ENCODE measurements at regions of chr11 and their contacts with region 1.

Region 1: GRCh38 chr11:5891216-5891800 is 1.7 kb upstream of the OR52E5 start:
- DNase-seq: peak in 2 of 14 experiments; percentile 5 to 15
- ATAC-seq: no peak
- H3K4me3 ChIP-seq: no peak overlapping the region
- H3K4me3 Mint-ChIP-seq: no peak overlapping the region
- H3K27ac ChIP-seq: no peak overlapping the region
- H3K27ac Mint-ChIP-seq: no peak overlapping the region
- H3K4me1 ChIP-seq: no peaks in the 10 kb centered on the region
- H3K4me1 Mint-ChIP-seq: no peaks in the 10 kb centered on the region
- H3K27me3 ChIP-seq: peaks cover 0 to 4% of the 10 kb centered on the region in 2 experiments
- H3K27me3 Mint-ChIP-seq: peaks cover 22% of the 10 kb centered on the region
- CTCF ChIP-seq: peak; percentile 48

Region 2: DNA sequence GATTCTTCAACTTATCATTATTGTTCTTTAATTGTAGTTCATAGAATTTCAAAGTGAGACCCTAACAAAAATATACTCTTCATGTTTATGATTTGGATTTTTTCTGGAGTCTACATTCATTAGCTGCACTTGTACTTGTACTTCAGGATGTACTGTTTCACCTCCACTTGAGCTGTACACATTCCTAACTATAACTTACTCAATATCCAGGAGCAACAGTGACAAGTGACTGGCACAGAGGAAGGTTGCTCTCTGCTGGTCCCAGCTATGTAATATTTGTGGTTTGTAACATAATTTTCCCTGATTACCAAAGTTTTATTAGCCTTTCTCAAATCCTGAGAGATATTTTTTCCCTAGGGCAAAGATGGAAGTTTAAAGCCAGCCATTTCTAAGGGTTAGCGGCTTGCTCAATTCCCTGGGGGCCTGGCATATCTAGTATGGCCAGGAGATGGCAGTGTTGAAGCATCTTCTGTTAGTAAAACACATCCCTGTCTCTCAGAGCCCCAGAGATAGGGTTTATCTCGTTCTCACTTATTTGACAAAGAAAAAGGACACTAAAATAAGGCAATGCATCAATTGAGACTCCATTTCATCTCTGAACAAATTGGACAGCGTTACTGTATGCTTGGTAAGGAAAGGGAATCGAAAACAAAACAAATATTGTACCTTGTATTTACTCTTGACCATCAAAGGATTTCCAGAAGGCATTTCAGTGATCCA is 767.3 kb before region 1 on chr11:
- CTCF ChIA-PET with region 1: no interaction called
- POLR2A ChIA-PET with region 1: no interaction called
- intact Hi-C with region 1: loop called (anchors 2 to 5 kb)
- DNase-seq: peak; percentile 3 to 61 (median 18)
- ATAC-seq: no peak
- H3K4me3 ChIP-seq: no peak overlapping the region
- H3K4me3 Mint-ChIP-seq: no peak overlapping the region
- H3K27ac ChIP-seq: no peak overlapping the region
- H3K27ac Mint-ChIP-seq: no peak overlapping the region
- H3K4me1 ChIP-seq: no peaks in the 10 kb centered on the region
- H3K4me1 Mint-ChIP-seq: no peaks in the 10 kb centered on the region
- H3K27me3 ChIP-seq: peaks cover 0 to 7% of the 10 kb centered on the region in 2 experiments
- H3K27me3 Mint-ChIP-seq: peaks cover 18% of the 10 kb centered on the region
- CTCF ChIP-seq: peak; percentile 71

Region 3: DNA sequence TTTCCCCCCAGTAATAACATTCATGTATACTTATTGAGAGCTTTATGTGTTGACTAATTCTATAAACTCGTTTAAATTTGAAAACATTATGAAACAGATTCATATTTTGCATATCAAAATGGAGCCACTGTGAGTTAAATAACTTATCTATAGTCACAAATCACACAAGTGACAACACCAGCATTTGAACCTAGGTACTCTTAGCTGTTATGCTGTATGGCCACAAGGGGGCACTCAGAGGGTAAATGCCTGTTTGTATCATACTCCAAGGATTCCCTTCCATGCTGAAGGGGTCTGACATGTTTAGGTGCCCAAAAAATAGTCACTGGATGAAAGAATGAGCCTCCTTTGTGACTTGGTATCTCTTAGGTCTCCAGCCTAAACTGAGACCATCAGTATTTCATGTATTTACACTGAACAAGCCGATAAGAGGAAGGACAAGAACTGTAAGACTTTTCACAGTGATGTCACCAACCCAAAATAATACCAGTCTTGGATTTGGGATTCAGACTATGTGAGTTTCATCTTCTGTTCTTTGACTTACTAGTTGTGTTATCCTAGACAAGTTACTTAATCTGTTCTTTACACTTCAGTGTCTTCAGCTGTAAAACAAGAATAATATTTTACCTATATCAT is 415.0 kb before region 1 on chr11:
- CTCF ChIA-PET with region 1: interaction called, 7 read pairs
- POLR2A ChIA-PET with region 1: no interaction called
- intact Hi-C with region 1: loop called in 1 of 2 experiments (anchors 5 kb)
- DNase-seq: peak in 13 of 14 experiments; percentile 2 to 64 (median 7)
- ATAC-seq: no peak
- H3K4me3 ChIP-seq: no peak overlapping the region
- H3K4me3 Mint-ChIP-seq: no peak overlapping the region
- H3K27ac ChIP-seq: no peak overlapping the region
- H3K27ac Mint-ChIP-seq: no peak overlapping the region
- H3K4me1 ChIP-seq: no peaks in the 10 kb centered on the region
- H3K4me1 Mint-ChIP-seq: no peaks in the 10 kb centered on the region
- H3K27me3 ChIP-seq: peaks cover 5 to 7% of the 10 kb centered on the region in 2 experiments
- H3K27me3 Mint-ChIP-seq: peaks cover 33% of the 10 kb centered on the region
- CTCF ChIP-seq: peak; percentile 73

Region 4: DNA sequence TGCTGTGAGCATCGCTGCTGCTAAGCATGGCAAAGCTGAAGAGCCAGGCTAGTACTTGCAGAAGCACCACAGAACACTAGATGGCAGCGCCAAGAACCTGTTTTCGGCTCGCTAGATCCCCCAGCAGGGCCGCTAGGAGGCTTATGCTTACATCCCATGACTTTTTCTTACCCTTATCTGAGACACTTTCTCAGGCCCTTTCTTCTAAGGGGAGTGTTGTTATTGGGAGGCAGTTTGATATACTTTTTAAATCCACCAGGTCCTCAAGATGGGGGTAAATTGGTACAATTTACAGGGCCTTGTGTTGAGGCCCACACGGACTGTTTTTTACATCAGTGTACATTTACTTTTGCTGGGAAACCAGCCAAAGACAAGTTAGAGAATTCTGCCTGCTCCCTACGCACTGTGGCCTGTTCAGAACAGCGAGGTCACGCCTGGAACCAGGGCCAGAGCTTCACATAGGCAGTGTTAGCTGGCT is 290.9 kb before region 1 on chr11:
- CTCF ChIA-PET with region 1: no interaction called
- POLR2A ChIA-PET with region 1: no interaction called
- intact Hi-C with region 1: loop called in 1 of 2 experiments (anchors 5 kb)
- DNase-seq: peak; percentile 40 to 78 (median 53)
- ATAC-seq: peak; percentile 90
- H3K4me3 ChIP-seq: no peak overlapping the region
- H3K4me3 Mint-ChIP-seq: no peak overlapping the region
- H3K27ac ChIP-seq: no peak overlapping the region
- H3K27ac Mint-ChIP-seq: no peak overlapping the region
- H3K4me1 ChIP-seq: peaks cover 8% of the 10 kb centered on the region
- H3K4me1 Mint-ChIP-seq: peaks cover 12% of the 10 kb centered on the region
- H3K27me3 ChIP-seq: peaks cover 0 to 8% of the 10 kb centered on the region in 2 experiments
- H3K27me3 Mint-ChIP-seq: peaks cover 20% of the 10 kb centered on the region
- CTCF ChIP-seq: peak; percentile 84

Region 5: GRCh38 chr11:5847711-5848110 is 43.6 kb before region 1 on chr11:
- CTCF ChIA-PET with region 1: no interaction called
- POLR2A ChIA-PET with region 1: no interaction called
- intact Hi-C with region 1: no loop called
- DNase-seq: no peak
- ATAC-seq: no peak
- H3K4me3 ChIP-seq: no peak overlapping the region
- H3K4me3 Mint-ChIP-seq: no peak overlapping the region
- H3K27ac ChIP-seq: no peak overlapping the region
- H3K27ac Mint-ChIP-seq: no peak overlapping the region
- H3K4me1 ChIP-seq: no peaks in the 10 kb centered on the region
- H3K4me1 Mint-ChIP-seq: no peaks in the 10 kb centered on the region
- H3K27me3 ChIP-seq: peaks cover 0 to 3% of the 10 kb centered on the region in 2 experiments
- H3K27me3 Mint-ChIP-seq: peaks cover 3% of the 10 kb centered on the region
- CTCF ChIP-seq: no peak

Region 6: GRCh38 chr11:6012035-6012668 is 120.8 kb after region 1 on chr11:
- CTCF ChIA-PET with region 1: no interaction called
- POLR2A ChIA-PET with region 1: no interaction called
- intact Hi-C with region 1: no loop called
- DNase-seq: no peak
- ATAC-seq: no peak
- H3K4me3 ChIP-seq: no peak overlapping the region
- H3K4me3 Mint-ChIP-seq: no peak overlapping the region
- H3K27ac ChIP-seq: no peak overlapping the region
- H3K27ac Mint-ChIP-seq: no peak overlapping the region
- H3K4me1 ChIP-seq: no peaks in the 10 kb centered on the region
- H3K4me1 Mint-ChIP-seq: no peaks in the 10 kb centered on the region
- H3K27me3 ChIP-seq: peaks cover 2 to 4% of the 10 kb centered on the region in 2 experiments
- H3K27me3 Mint-ChIP-seq: peaks cover 37% of the 10 kb centered on the region
- CTCF ChIP-seq: no peak

Region 7: GRCh38 chr11:6612213-6613041 is 721.1 kb after region 1 on chr11 and contains the start of gene TAF10:
- CTCF ChIA-PET with region 1: no interaction called
- POLR2A ChIA-PET with region 1: no interaction called
- intact Hi-C with region 1: no loop called
- DNase-seq: peak; percentile 88 to 98 (median 95)
- ATAC-seq: peak; percentile 86
- H3K4me3 ChIP-seq: peak within 1 kb of the TSS; percentile 90
- H3K4me3 Mint-ChIP-seq: peak within 1 kb of the TSS; percentile 92
- H3K27ac ChIP-seq: peak within 1 kb of the TSS; percentile 96 to 98
- H3K27ac Mint-ChIP-seq: no peak within 1 kb of the TSS
- H3K4me1 ChIP-seq: peaks cover 63% of the 10 kb centered on the region
- H3K4me1 Mint-ChIP-seq: peaks cover 35% of the 10 kb centered on the region
- H3K27me3 ChIP-seq: no peaks in the 10 kb centered on the region
- H3K27me3 Mint-ChIP-seq: no peaks in the 10 kb centered on the region
- CTCF ChIP-seq: peak; percentile 47
- total RNA-seq, gene TAF10: 154 to 164 TPM

Measured in CD4-positive, alpha-beta T cell (primary cell).